ENCODE measurements at regions of chr7 and their contacts with region 1.

Region 1: GRCh38 chr7:44082541-44083207 is 344 bp upstream of the POLM start:
- DNase-seq: peak; percentile 99
- H3K4me3 ChIP-seq: peak overlapping the region; percentile 70
- H3K27ac ChIP-seq: no peak overlapping the region
- H3K4me1 ChIP-seq: peaks cover 15% of the 10 kb centered on the region; the same call in 1 of the 2 replicates
- H3K27me3 ChIP-seq: no peaks in the 10 kb centered on the region
- CTCF ChIP-seq: no peak

Region 2: DNA sequence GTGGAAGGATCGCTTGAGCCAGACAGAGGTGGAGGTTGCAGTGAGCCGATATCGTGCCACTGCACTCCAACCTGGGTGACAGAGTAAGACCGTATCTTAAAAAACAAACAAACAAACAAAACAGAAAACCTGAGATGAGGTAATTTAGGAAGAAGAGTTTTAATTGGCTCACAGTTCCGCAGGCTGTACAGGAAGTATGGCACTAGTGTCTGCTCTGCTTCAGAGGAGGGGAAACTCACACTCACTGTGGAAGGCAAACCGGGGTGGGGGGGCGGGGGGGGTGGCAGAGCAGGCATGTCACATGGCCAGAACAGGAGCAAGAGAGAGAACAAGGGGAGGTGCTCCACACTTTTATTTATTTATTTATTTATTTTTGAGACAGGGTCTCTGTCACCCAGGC is 151.3 kb before region 1 on chr7:
- CTCF ChIA-PET with region 1: no interaction called
- POLR2A ChIA-PET with region 1: interaction called, 18 read pairs
- intact Hi-C with region 1: no loop called
- DNase-seq: peak in 1 of 2 experiments; percentile 25
- H3K4me3 ChIP-seq: no peak overlapping the region
- H3K27ac ChIP-seq: no peak overlapping the region
- H3K4me1 ChIP-seq: 0 out of 2 replicates have a peak, but pooled peaks cover 10% of the 10 kb centered on the region
- H3K27me3 ChIP-seq: no peaks in the 10 kb centered on the region
- CTCF ChIP-seq: no peak

Region 3: DNA sequence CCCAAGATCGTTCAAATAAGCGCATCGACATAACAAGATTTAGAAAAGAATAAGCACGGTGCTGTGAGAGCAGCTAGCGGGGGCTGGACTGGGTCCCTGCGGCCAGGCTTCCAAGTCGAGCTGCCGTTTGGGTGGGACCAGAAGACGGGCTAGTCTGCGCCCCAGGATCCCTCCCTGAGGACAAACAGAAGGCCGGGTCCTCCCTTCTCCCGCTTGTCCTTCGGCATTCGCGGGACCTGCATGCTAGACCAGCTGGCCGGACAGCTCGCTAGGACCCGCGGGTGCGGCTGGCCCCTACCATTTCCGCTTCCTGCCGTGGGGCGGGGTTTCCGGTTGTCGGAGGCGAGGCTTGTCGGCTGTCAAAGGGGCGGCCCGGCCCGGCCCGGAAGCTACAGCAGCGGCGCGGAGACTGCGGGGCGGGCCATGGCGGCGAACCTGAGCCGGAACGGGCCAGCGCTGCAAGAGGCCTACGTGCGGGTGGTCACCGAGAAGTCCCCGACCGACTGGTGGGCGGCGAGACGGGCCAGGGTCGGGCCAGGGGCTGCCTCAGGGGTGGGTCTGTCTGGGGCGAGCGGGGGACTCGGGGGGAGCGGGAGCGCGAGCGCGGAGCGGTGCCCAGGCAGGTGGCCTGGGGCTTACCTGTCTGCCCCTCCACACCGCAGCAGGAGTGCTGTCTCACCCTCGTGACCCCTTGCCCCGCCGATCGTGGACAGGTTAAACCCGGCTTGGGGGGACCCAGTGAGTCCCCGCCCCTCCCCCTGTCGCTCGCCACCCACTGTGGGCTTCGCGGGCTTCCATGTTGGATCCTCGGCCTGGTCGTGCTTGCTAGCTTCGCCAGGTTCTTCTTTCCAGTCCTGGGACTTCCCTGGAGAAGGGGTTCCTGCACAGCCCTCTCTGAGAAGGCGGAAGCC is 38.1 kb before region 1 on chr7 and contains the start of gene DBNL:
- CTCF ChIA-PET with region 1: no interaction called
- POLR2A ChIA-PET with region 1: no interaction called
- intact Hi-C with region 1: loop called (anchors 2 kb)
- DNase-seq: peak; percentile 92 to 97
- H3K4me3 ChIP-seq: peak within 1 kb of the TSS; percentile 85
- H3K27ac ChIP-seq: no peak within 1 kb of the TSS
- H3K4me1 ChIP-seq: peaks cover 14% of the 10 kb centered on the region
- H3K27me3 ChIP-seq: no peaks in the 10 kb centered on the region
- CTCF ChIP-seq: no peak
- total RNA-seq, gene DBNL: 65.6 and 70.7 TPM in 2 replicates

Region 4: DNA sequence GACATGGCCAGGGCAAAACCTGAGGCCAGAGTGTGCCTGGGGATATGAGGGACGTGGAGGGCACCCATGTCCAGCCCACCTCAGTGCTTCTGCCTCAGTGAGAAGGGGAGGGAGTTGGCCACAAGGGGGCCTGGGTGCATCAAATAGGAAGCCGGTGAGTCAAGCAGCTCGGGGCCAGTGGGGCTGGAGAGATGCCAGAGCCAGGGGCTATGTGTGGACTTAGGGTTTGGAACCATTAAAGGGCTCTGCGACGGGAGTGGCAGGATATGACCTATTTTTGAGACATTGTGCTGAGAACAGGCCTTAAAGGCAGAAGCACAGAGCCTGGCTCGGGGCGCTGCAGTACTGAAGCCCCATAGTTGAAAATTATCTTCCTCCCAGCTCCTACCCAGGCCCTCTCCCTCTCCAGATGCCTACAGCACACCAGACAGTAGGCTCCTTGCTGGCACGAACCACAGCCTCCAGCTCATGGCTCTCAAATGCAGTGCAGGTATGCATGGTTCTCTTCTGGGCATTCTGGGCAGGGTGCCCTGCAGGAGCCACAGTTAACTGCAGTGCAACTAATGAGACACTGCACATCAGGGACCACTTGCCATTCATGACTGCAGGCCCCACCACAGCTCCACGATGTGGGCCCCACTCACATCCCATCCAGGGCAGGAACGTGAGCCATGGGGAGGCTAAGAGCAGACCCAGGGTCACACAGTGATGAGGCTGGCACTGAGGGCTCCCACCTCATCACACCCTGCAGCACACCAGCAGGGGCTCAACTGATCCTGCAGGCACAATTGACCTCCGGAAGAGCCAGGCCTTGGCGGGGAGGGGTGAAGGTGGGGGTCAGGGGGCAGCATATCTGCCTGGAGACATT is 10.1 kb before region 1 on chr7:
- CTCF ChIA-PET with region 1: no interaction called
- POLR2A ChIA-PET with region 1: interaction called, 11 read pairs
- intact Hi-C with region 1: no loop called
- DNase-seq: peak; percentile 94 to 96
- H3K4me3 ChIP-seq: peak overlapping the region; percentile 30; the same call in 1 of the 2 replicates
- H3K27ac ChIP-seq: peak overlapping the region; percentile 27
- H3K4me1 ChIP-seq: peaks cover 47% of the 10 kb centered on the region
- H3K27me3 ChIP-seq: no peaks in the 10 kb centered on the region
- CTCF ChIP-seq: peak; percentile 93

Region 5: GRCh38 chr7:44123190-44124003 is 40.7 kb after region 1 on chr7 and contains the start of gene POLD2:
- CTCF ChIA-PET with region 1: interaction called, 3 read pairs
- POLR2A ChIA-PET with region 1: no interaction called
- intact Hi-C with region 1: loop called (anchors 2 kb)
- DNase-seq: peak; percentile 94 to 100
- H3K4me3 ChIP-seq: peak within 1 kb of the TSS; percentile 65
- H3K27ac ChIP-seq: peak within 1 kb of the TSS; percentile 1; the same call in 1 of the 2 replicates
- H3K4me1 ChIP-seq: peaks cover 11% of the 10 kb centered on the region
- H3K27me3 ChIP-seq: no peaks in the 10 kb centered on the region
- CTCF ChIP-seq: no peak
- total RNA-seq, gene POLD2: 217 and 249 TPM in 2 replicates

Region 6: GRCh38 chr7:44184206-44184872 is 101.7 kb after region 1 on chr7:
- CTCF ChIA-PET with region 1: no interaction called
- POLR2A ChIA-PET with region 1: no interaction called
- intact Hi-C with region 1: loop called (anchors 5 kb)
- DNase-seq: peak; percentile 90 to 99
- H3K4me3 ChIP-seq: no peak overlapping the region
- H3K27ac ChIP-seq: peak overlapping the region; percentile 35
- H3K4me1 ChIP-seq: peaks cover 51% of the 10 kb centered on the region
- H3K27me3 ChIP-seq: no peaks in the 10 kb centered on the region
- CTCF ChIP-seq: no peak

Region 7: DNA sequence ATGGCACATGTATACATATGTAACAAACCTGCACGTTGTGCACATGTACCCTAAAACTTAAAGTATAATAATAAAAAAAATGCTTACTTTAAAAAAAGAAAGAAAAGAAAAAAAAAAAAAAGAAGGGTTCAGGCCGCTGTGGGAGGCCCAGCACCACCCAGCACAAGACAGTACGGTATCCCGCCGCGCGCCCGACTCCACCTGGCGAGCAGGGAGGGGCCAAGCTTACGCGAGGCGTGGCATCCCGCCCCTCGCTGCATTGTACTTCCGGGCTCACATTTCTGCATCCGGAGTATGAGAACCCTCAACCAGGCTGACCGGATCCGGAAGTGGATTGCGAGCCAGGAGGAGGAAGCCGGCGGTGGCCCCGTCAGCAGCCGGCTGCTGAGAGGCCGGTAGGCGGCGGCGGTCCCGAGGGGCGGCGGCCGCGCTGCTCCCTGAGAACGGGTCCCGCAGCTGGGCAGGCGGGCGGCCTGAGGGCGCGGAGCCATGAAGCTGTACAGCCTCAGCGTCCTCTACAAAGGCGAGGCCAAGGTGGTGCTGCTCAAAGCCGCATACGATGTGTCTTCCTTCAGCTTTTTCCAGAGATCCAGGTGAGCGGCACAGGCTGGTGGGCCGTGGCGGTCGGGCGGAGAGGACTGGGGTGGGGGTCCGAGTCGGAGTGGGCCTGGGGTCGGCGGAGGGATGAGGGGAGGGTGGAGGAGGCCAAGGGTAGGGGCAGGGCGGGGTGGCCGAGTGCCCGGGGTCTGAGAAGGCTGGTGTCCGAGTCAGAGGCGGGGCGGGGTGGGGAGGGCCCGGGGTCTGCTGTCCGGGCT is 118.2 kb after region 1 on chr7 and contains the start of gene YKT6:
- CTCF ChIA-PET with region 1: no interaction called
- POLR2A ChIA-PET with region 1: interaction called, 13 read pairs
- intact Hi-C with region 1: loop called (anchors 1 kb)
- DNase-seq: peak; percentile 97 to 98
- H3K4me3 ChIP-seq: peak within 1 kb of the TSS; percentile 97
- H3K27ac ChIP-seq: 0 out of 2 replicates have a peak within 1 kb of the TSS, but pooled peaks have one; percentile 10
- H3K4me1 ChIP-seq: peaks cover 9% of the 10 kb centered on the region
- H3K27me3 ChIP-seq: no peaks in the 10 kb centered on the region
- CTCF ChIP-seq: peak; percentile 68; the same call in 1 of the 2 replicates
- total RNA-seq, gene YKT6: 109 and 142 TPM in 2 replicates

Measured in PC-9 (cell line).